ENCODE measurements at regions of chr20 and their contacts with region 1.

Region 1: GRCh38 chr20:58727292-58727691 is 34.7 kb downstream of the NPEPL1 start:
- DNase-seq: no peak
- H3K4me3 Mint-ChIP-seq: no peak overlapping the region
- H3K27ac Mint-ChIP-seq: no peak overlapping the region
- H3K4me1 Mint-ChIP-seq: no peaks in the 10 kb centered on the region
- H3K27me3 Mint-ChIP-seq: peaks cover 49% of the 10 kb centered on the region

Region 2: GRCh38 chr20:58709013-58709702 is 18.1 kb before region 1 on chr20:
- intact Hi-C with region 1: loop called (anchors 1 kb)
- DNase-seq: no peak
- H3K4me3 Mint-ChIP-seq: no peak overlapping the region
- H3K27ac Mint-ChIP-seq: no peak overlapping the region
- H3K4me1 Mint-ChIP-seq: no peaks in the 10 kb centered on the region
- H3K27me3 Mint-ChIP-seq: no peaks in the 10 kb centered on the region